CD8-positive, alpha-beta T cell (primary cell): ENCODE measurements at regions of chr13 and their contacts with region 1.

Region 1: DNA sequence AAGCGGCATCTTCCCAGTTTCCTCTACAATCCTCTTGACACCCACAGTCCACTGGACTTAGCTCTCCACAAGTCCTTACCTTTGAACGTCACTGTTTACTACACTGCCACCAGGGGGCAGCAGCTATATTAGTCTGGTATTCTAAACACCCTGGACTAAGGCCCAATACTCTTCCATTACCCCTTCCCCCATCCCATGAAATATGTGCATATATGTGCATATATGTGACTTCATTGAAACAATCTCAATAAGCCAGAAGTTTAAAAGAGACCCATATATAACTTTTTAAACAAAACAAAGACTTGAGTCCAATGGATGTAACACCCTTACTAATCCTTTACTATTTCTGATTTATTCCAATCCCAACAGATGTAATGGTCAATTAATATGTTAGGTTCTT is 15.5 kb downstream of the GGACT start:
- DNase-seq: peak; percentile 23 to 85 (median 80)
- ATAC-seq: peak; percentile 78
- H3K4me3 ChIP-seq: no peak overlapping the region
- H3K4me3 Mint-ChIP-seq: no peak overlapping the region
- H3K27ac ChIP-seq: no peak overlapping the region
- H3K27ac Mint-ChIP-seq: no peak overlapping the region
- H3K4me1 ChIP-seq: no peaks in the 10 kb centered on the region
- H3K4me1 Mint-ChIP-seq: peaks cover 13% of the 10 kb centered on the region
- H3K27me3 ChIP-seq: no peaks in the 10 kb centered on the region
- H3K27me3 Mint-ChIP-seq: no peaks in the 10 kb centered on the region
- CTCF ChIP-seq: peak; percentile 85

Region 2: GRCh38 chr13:100560498-100561157 is 12.5 kb before region 1 on chr13:
- CTCF ChIA-PET with region 1: interaction called, 10 read pairs
- POLR2A ChIA-PET with region 1: interaction called, 3 read pairs
- intact Hi-C with region 1: no loop called
- DNase-seq: no peak
- ATAC-seq: no peak
- H3K4me3 ChIP-seq: no peak overlapping the region
- H3K4me3 Mint-ChIP-seq: no peak overlapping the region
- H3K27ac ChIP-seq: no peak overlapping the region
- H3K27ac Mint-ChIP-seq: no peak overlapping the region
- H3K4me1 ChIP-seq: no peaks in the 10 kb centered on the region
- H3K4me1 Mint-ChIP-seq: peaks cover 5% of the 10 kb centered on the region
- H3K27me3 ChIP-seq: no peaks in the 10 kb centered on the region
- H3K27me3 Mint-ChIP-seq: no peaks in the 10 kb centered on the region
- CTCF ChIP-seq: no peak

Region 3: DNA sequence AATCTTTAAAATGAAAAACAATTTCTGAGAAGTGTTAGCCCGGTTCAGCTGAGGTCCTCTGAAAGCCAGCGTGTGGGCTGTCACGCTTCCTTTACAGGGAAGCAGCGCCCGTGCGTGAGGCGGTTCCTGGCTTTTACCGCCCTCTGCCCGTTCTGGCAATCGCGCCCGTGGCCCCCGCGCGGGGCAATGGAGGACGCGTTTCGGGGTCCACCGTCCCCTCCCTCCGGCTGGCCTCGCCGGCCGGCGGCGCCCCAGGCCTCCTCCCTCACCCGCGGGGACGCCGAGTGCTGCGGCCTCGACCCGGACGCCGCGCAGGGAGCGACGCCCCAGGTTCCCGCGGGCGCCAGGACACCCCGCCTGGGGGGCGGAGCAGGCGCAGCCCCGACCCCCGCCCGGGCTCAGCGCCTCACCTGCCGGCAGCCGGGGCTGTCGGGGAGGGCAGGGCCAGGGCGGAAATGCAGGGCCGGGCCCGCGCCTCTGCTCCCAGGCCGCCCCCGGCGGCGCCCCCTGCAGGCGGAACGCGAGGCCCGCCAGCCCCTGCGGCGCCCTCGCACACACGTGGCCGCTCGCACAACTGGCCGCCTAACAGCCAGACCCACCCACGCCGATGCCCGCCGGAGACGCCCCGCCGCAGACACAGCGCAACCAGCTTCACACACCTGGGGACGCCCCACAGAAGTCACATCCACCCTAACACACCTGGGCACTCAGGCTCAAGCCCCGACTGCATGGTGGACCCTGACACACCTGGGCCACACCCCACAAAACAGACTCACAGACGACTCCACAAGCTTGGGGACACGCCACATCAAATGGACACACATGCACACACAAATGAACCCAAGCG is 15.4 kb after region 1 on chr13 and contains the start of gene GGACT:
- CTCF ChIA-PET with region 1: interaction called, 62 read pairs
- POLR2A ChIA-PET with region 1: interaction called, 9 read pairs
- intact Hi-C with region 1: loop called (anchors 1 kb)
- DNase-seq: peak; percentile 68 to 93 (median 85)
- ATAC-seq: peak; percentile 95
- H3K4me3 ChIP-seq: peak within 1 kb of the TSS; percentile 65 to 70
- H3K4me3 Mint-ChIP-seq: peak within 1 kb of the TSS; percentile 84
- H3K27ac ChIP-seq: peak within 1 kb of the TSS; percentile 80 to 82
- H3K27ac Mint-ChIP-seq: peak within 1 kb of the TSS; percentile 89
- H3K4me1 ChIP-seq: peaks cover 39% of the 10 kb centered on the region
- H3K4me1 Mint-ChIP-seq: peaks cover 44% of the 10 kb centered on the region
- H3K27me3 ChIP-seq: no peaks in the 10 kb centered on the region
- H3K27me3 Mint-ChIP-seq: no peaks in the 10 kb centered on the region
- CTCF ChIP-seq: peak; percentile 74
- total RNA-seq, gene GGACT: 0.98 to 1.1 TPM

Region 4: DNA sequence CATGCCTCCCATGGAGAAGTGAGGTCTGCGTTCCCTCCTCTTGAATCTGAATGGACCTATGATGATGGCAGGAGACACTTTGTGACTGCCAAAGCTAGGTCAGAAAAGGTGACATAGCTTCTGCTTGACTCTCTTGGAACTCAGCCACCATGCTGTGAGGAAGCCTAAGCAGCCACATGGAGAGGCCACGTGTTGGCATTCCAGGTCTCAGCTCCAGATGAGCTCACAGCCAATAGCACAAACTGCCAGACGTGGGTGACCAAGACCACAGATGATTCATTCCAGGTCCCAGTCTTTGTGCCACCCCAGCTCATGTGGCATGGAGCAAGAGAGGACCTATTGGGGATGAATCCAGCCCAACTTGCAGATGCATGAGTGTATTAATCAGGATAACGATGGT is 24.1 kb after region 1 on chr13:
- CTCF ChIA-PET with region 1: interaction called, 62 read pairs
- POLR2A ChIA-PET with region 1: no interaction called
- intact Hi-C with region 1: no loop called
- DNase-seq: no peak
- ATAC-seq: no peak
- H3K4me3 ChIP-seq: no peak overlapping the region
- H3K4me3 Mint-ChIP-seq: no peak overlapping the region
- H3K27ac ChIP-seq: no peak overlapping the region
- H3K27ac Mint-ChIP-seq: no peak overlapping the region
- H3K4me1 ChIP-seq: no peaks in the 10 kb centered on the region
- H3K4me1 Mint-ChIP-seq: no peaks in the 10 kb centered on the region
- H3K27me3 ChIP-seq: no peaks in the 10 kb centered on the region
- H3K27me3 Mint-ChIP-seq: no peaks in the 10 kb centered on the region
- CTCF ChIP-seq: no peak

Region 5: GRCh38 chr13:100883453-100883852 is 310.3 kb after region 1 on chr13:
- CTCF ChIA-PET with region 1: no interaction called
- POLR2A ChIA-PET with region 1: no interaction called
- intact Hi-C with region 1: loop called in 1 of 2 experiments (anchors 5 kb)
- DNase-seq: no peak
- ATAC-seq: no peak
- H3K4me3 ChIP-seq: no peak overlapping the region
- H3K4me3 Mint-ChIP-seq: no peak overlapping the region
- H3K27ac ChIP-seq: no peak overlapping the region
- H3K27ac Mint-ChIP-seq: no peak overlapping the region
- H3K4me1 ChIP-seq: no peaks in the 10 kb centered on the region
- H3K4me1 Mint-ChIP-seq: no peaks in the 10 kb centered on the region
- H3K27me3 ChIP-seq: no peaks in the 10 kb centered on the region
- H3K27me3 Mint-ChIP-seq: peaks cover 9% of the 10 kb centered on the region
- CTCF ChIP-seq: no peak

Region 6: DNA sequence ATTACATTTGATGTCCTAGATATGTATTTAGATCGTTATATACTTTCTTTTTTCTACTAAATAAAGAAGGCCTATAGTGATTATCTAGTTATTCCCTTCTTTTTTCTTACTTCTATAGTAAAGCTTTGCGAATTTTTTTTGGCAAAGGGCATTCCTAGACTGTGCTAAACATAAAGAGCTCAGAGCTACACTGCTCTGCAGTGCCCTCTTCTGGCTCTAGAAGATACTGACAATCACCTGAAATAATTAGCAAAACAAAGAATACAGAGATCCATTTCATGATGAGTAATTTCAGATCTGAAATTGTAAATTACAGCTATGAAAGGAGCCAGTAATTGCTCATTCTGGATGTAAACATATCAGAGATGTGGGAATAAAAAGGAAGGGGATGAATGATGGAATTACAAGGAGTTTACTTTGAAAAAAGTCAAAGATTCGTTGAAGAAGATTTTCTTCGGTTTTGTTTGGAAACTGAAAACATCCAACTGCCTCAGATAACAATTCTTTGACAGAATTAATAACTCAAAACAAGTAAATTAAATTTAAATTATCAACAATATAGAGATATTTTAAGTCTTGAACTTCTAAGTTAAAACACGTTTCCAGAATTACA is 554.7 kb after region 1 on chr13:
- CTCF ChIA-PET with region 1: interaction called, 7 read pairs
- POLR2A ChIA-PET with region 1: no interaction called
- intact Hi-C with region 1: loop called in 1 of 2 experiments (anchors 2 kb)
- DNase-seq: peak in 3 of 9 experiments; percentile 12 to 56 (median 39)
- ATAC-seq: peak; percentile 68
- H3K4me3 ChIP-seq: no peak overlapping the region
- H3K4me3 Mint-ChIP-seq: no peak overlapping the region
- H3K27ac ChIP-seq: no peak overlapping the region
- H3K27ac Mint-ChIP-seq: no peak overlapping the region
- H3K4me1 ChIP-seq: no peaks in the 10 kb centered on the region
- H3K4me1 Mint-ChIP-seq: no peaks in the 10 kb centered on the region
- H3K27me3 ChIP-seq: no peaks in the 10 kb centered on the region
- H3K27me3 Mint-ChIP-seq: peaks cover 6% of the 10 kb centered on the region
- CTCF ChIP-seq: peak; percentile 72